ENCODE measurements at regions of chr14 and their contacts with region 1.

Region 1: GRCh38 chr14:21476925-21477681 is at the starts of genes RAB2B and TOX4:
- DNase-seq: peak; percentile 100
- ATAC-seq: peak; percentile 97
- H3K4me3 ChIP-seq: peak within 1 kb of the TSS; percentile 83 to 99 (median 87)
- H3K27ac ChIP-seq: peak within 1 kb of the TSS; percentile 87
- H3K4me1 ChIP-seq: peaks cover 34% of the 10 kb centered on the region
- H3K27me3 ChIP-seq: no peaks in the 10 kb centered on the region; a peak in 1 of 5 replicates
- CTCF ChIP-seq: peak; percentile 99
- EP300 ChIP-seq: peak; percentile 14 to 50; a peak in 2 of 4 replicates
- POLR2A ChIP-seq: peak; percentile 85 to 88
- RAD21 ChIP-seq: peak; percentile 49
- total RNA-seq, gene RAB2B: 36.0 and 46.4 TPM in 2 replicates
- total RNA-seq, gene TOX4: 71.8 and 124 TPM in 2 replicates

Region 2: GRCh38 chr14:21269252-21270046 is 207.7 kb before region 1 on chr14 and contains the start of gene HNRNPC:
- CTCF ChIA-PET with region 1: no interaction called
- POLR2A ChIA-PET with region 1: no interaction called
- in situ Hi-C with region 1: no loop called
- intact Hi-C with region 1: loop called (anchors 1 kb)
- DNase-seq: peak; percentile 100
- ATAC-seq: peak; percentile 96
- H3K4me3 ChIP-seq: peak within 1 kb of the TSS; percentile 86 to 98 (median 90)
- H3K27ac ChIP-seq: peak within 1 kb of the TSS; percentile 92
- H3K4me1 ChIP-seq: peaks cover 32% of the 10 kb centered on the region
- H3K27me3 ChIP-seq: peaks cover 0 to 5% of the 10 kb centered on the region in 2 experiments; a peak in 2 of 5 replicates
- CTCF ChIP-seq: no peak
- EP300 ChIP-seq: peak; percentile 31 to 58; a peak in 2 of 4 replicates
- POLR2A ChIP-seq: peak; percentile 99
- RAD21 ChIP-seq: peak; percentile 42; the same call in 1 of the 2 replicates
- total RNA-seq, gene HNRNPC: 1,099 and 1,563 TPM in 2 replicates

Region 3: GRCh38 chr14:21437063-21437901 is 39.8 kb before region 1 on chr14:
- CTCF ChIA-PET with region 1: no interaction called
- POLR2A ChIA-PET with region 1: interaction called, 22 read pairs
- in situ Hi-C with region 1: no loop called
- intact Hi-C with region 1: loop called (anchors 1 kb)
- DNase-seq: peak; percentile 100
- ATAC-seq: peak; percentile 97
- H3K4me3 ChIP-seq: peak overlapping the region; percentile 85 to 96 (median 87)
- H3K27ac ChIP-seq: peak overlapping the region; percentile 92
- H3K4me1 ChIP-seq: peaks cover 46% of the 10 kb centered on the region
- H3K27me3 ChIP-seq: peaks cover 0 to 4% of the 10 kb centered on the region in 2 experiments; a peak in 1 of 5 replicates
- CTCF ChIP-seq: no peak; the same call in 1 of the 2 replicates
- EP300 ChIP-seq: 0 out of 4 replicates have a peak, but pooled peaks of 1 of the 2 experiments have one; percentile 30
- POLR2A ChIP-seq: peak; percentile 71 to 79
- RAD21 ChIP-seq: peak; percentile 61

Region 4: GRCh38 chr14:21498553-21499526 is 21.7 kb after region 1 on chr14:
- CTCF ChIA-PET with region 1: no interaction called
- POLR2A ChIA-PET with region 1: interaction called, 10 read pairs
- in situ Hi-C with region 1: no loop called
- intact Hi-C with region 1: loop called (anchors 2 kb)
- DNase-seq: peak; percentile 77
- ATAC-seq: peak; percentile 78
- H3K4me3 ChIP-seq: no peak overlapping the region
- H3K27ac ChIP-seq: peak overlapping the region; percentile 41
- H3K4me1 ChIP-seq: no peaks in the 10 kb centered on the region
- H3K27me3 ChIP-seq: no peaks in the 10 kb centered on the region
- CTCF ChIP-seq: peak; percentile 79
- EP300 ChIP-seq: no peak
- POLR2A ChIP-seq: 0 out of 4 replicates have a peak, but pooled peaks of 1 of the 2 experiments have one; percentile 18
- RAD21 ChIP-seq: peak; percentile 82

Region 5: DNA sequence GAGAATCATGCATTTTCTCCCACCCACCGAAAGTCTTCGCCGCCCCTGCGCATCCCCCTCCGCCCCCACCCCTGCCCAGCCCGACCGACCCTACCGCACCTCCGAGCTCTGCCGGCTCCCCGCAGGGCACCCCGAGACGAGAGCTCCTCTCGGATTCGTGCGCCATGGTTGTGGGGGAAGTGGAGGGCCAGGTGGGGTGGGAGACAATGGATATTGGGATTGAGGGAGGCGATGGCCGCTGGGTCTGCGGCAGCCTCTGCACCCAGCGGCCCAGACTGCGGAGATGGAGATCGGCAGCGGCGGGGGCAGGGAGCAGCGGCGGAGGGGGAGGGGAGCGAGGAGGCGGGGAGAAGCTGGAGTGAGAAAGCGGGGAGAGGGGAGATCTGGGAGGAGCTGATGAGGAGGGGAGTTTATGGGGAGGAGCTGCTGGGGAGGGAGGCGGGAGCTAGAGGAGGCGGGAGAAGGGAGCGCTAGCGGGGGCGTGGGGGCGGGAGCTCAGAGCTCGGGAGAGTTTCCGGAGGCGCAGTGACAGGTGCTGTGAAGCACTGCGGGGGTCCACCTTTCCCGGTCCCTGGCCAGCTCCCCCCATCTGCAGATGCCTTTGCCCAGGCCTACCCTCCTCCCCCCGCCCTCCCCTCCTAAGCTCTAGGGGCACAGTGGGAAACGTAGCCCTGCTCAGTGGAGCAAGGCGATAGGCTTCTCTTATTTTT is 49.0 kb after region 1 on chr14 and contains the start of gene SALL2:
- CTCF ChIA-PET with region 1: no interaction called
- POLR2A ChIA-PET with region 1: interaction called, 4 read pairs
- in situ Hi-C with region 1: no loop called
- intact Hi-C with region 1: loop called (anchors 1 kb)
- DNase-seq: peak; percentile 79
- ATAC-seq: peak; percentile 84
- H3K4me3 ChIP-seq: peak within 1 kb of the TSS; percentile 77 to 83 (median 78)
- H3K27ac ChIP-seq: peak within 1 kb of the TSS; percentile 69
- H3K4me1 ChIP-seq: peaks cover 40% of the 10 kb centered on the region
- H3K27me3 ChIP-seq: no peaks in the 10 kb centered on the region
- CTCF ChIP-seq: no peak
- EP300 ChIP-seq: no peak
- POLR2A ChIP-seq: peak in 1 of 2 experiments; percentile 93; a peak in 2 of 4 replicates
- RAD21 ChIP-seq: no peak
- total RNA-seq, gene SALL2: 4.9 and 7.6 TPM in 2 replicates